ENCODE measurements at regions of chr4 and their contacts with region 1.

Region 1: GRCh38 chr4:122577808-122578781 is 42.8 kb downstream of the IL21 start:
- DNase-seq: peak; percentile 84 to 93 (median 87)
- H3K4me3 ChIP-seq: peak overlapping the region in 1 of 2 donors; percentile 12
- H3K4me3 Mint-ChIP-seq: peak overlapping the region; percentile 69 to 85 (median 78)
- H3K27ac ChIP-seq: peak overlapping the region; percentile 60
- H3K27ac Mint-ChIP-seq: peak overlapping the region; percentile 84 to 98 (median 96)
- H3K4me1 ChIP-seq: peaks cover 32% of the 10 kb centered on the region
- H3K4me1 Mint-ChIP-seq: peaks cover 29 to 49% (median 34%) of the 10 kb centered on the region in 4 donors
- H3K27me3 ChIP-seq: no peaks in the 10 kb centered on the region
- H3K27me3 Mint-ChIP-seq: no peaks in the 10 kb centered on the region

Region 2: GRCh38 chr4:121823505-121824170 is 754.5 kb before region 1 on chr4 and contains the start of gene CCNA2:
- CTCF ChIA-PET with region 1: interaction called, 3 read pairs
- POLR2A ChIA-PET with region 1: no interaction called
- intact Hi-C with region 1: loop called (anchors 5 kb)
- DNase-seq: peak; percentile 93 to 97 (median 94)
- H3K4me3 ChIP-seq: peak within 1 kb of the TSS; percentile 62 to 73
- H3K4me3 Mint-ChIP-seq: peak within 1 kb of the TSS; percentile 87 to 98 (median 91)
- H3K27ac ChIP-seq: peak within 1 kb of the TSS; percentile 55
- H3K27ac Mint-ChIP-seq: peak within 1 kb of the TSS; percentile 77 to 99 (median 92)
- H3K4me1 ChIP-seq: peaks cover 19% of the 10 kb centered on the region
- H3K4me1 Mint-ChIP-seq: peaks cover 6 to 21% (median 15%) of the 10 kb centered on the region in 4 donors
- H3K27me3 ChIP-seq: no peaks in the 10 kb centered on the region
- H3K27me3 Mint-ChIP-seq: no peaks in the 10 kb centered on the region
- total RNA-seq, gene CCNA2: 1.2 to 1.4 TPM

Region 3: DNA sequence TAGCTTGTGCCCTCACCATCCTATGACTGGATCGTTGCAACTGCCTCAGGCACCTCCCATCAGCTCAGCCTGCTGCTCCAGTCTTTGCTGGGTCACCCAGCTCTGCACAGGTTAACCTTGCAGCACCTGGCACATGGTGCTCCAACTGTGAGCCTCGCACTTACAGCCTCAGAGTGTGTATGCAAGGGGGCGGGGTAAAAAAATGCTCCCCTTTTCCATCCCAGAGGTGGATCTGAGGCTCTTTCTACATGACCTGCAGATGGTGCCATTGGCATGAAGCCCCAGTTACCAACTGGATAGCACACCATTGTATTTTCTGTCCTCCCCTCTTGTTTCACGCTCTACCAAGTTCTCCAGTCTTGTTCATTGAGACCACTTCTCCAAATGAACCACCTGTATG is 580.1 kb before region 1 on chr4:
- CTCF ChIA-PET with region 1: no interaction called
- POLR2A ChIA-PET with region 1: no interaction called
- intact Hi-C with region 1: loop called (anchors 5 kb)
- DNase-seq: peak in 3 of 5 donors; percentile 6 to 12 (median 7)
- H3K4me3 ChIP-seq: no peak overlapping the region
- H3K4me3 Mint-ChIP-seq: no peak overlapping the region
- H3K27ac ChIP-seq: no peak overlapping the region
- H3K27ac Mint-ChIP-seq: no peak overlapping the region
- H3K4me1 ChIP-seq: no peaks in the 10 kb centered on the region
- H3K4me1 Mint-ChIP-seq: no peaks in the 10 kb centered on the region
- H3K27me3 ChIP-seq: no peaks in the 10 kb centered on the region
- H3K27me3 Mint-ChIP-seq: peaks cover 14 to 21% of the 10 kb centered on the region in 2 donors

Region 4: DNA sequence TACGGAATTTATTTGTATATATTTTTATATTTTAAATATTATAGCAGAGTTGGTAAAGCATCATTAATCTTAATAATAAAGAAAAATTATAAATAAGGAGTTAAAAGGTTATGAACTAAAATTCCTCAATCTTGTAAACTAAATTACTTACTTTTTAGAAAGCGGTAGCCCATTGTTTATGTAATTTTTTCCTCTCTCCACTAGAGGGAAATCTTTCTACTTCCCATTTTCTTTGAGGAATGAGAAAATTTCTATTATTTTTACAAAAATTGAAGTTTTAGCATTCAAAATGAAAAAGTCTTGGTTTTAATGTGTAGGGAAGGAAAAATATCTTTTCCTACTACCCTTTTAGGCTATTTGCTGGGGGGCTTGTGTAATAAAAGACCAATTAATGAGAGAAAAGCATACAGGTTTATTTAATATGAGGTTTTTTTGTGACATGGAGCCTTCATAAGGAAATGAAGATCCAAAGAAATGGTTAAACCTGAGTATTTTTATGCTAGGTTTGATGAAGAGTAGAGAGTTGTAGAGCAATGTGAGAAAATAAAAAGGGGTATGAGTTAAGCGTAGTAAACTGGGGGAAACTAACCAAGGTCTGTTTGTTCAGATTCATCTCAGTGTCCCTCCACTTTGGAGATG is 268.0 kb before region 1 on chr4:
- CTCF ChIA-PET with region 1: interaction called, 38 read pairs
- POLR2A ChIA-PET with region 1: no interaction called
- intact Hi-C with region 1: loop called (anchors 1 kb)
- DNase-seq: no peak
- H3K4me3 ChIP-seq: no peak overlapping the region
- H3K4me3 Mint-ChIP-seq: no peak overlapping the region
- H3K27ac ChIP-seq: no peak overlapping the region
- H3K27ac Mint-ChIP-seq: peak overlapping the region in 2 of 7 donors; percentile 23 to 75
- H3K4me1 ChIP-seq: no peaks in the 10 kb centered on the region
- H3K4me1 Mint-ChIP-seq: peaks cover 0 to 4% (median 2%) of the 10 kb centered on the region in 4 donors
- H3K27me3 ChIP-seq: no peaks in the 10 kb centered on the region
- H3K27me3 Mint-ChIP-seq: no peaks in the 10 kb centered on the region

Region 5: DNA sequence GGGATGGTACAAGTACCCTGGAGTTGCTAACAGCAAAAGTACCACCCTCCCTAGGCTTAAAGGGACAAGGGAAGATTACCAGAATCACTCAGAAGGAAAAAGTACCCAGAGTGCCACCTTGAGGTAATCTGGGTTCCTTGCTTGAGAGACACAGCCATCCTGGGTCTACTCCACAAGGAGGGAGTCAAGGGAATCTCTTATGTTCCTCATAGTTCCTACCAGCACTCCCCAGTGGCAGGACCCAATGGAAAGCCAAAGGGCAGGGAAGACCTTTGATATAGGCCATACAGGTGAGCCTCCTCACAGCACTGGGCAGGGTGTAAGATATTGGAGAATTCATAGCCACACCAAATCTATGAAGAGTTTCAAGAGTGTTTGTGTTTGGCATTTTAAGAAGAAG is 127.2 kb before region 1 on chr4:
- CTCF ChIA-PET with region 1: interaction called, 24 read pairs
- POLR2A ChIA-PET with region 1: interaction called, 39 read pairs
- intact Hi-C with region 1: loop called (anchors 1 kb)
- DNase-seq: peak in 1 of 5 donors; percentile 11
- H3K4me3 ChIP-seq: no peak overlapping the region
- H3K4me3 Mint-ChIP-seq: no peak overlapping the region
- H3K27ac ChIP-seq: no peak overlapping the region
- H3K27ac Mint-ChIP-seq: peak overlapping the region in 1 of 7 donors; percentile 85
- H3K4me1 ChIP-seq: peaks cover 29% of the 10 kb centered on the region
- H3K4me1 Mint-ChIP-seq: peaks cover 23 to 32% (median 26%) of the 10 kb centered on the region in 4 donors
- H3K27me3 ChIP-seq: no peaks in the 10 kb centered on the region
- H3K27me3 Mint-ChIP-seq: no peaks in the 10 kb centered on the region

Region 6: DNA sequence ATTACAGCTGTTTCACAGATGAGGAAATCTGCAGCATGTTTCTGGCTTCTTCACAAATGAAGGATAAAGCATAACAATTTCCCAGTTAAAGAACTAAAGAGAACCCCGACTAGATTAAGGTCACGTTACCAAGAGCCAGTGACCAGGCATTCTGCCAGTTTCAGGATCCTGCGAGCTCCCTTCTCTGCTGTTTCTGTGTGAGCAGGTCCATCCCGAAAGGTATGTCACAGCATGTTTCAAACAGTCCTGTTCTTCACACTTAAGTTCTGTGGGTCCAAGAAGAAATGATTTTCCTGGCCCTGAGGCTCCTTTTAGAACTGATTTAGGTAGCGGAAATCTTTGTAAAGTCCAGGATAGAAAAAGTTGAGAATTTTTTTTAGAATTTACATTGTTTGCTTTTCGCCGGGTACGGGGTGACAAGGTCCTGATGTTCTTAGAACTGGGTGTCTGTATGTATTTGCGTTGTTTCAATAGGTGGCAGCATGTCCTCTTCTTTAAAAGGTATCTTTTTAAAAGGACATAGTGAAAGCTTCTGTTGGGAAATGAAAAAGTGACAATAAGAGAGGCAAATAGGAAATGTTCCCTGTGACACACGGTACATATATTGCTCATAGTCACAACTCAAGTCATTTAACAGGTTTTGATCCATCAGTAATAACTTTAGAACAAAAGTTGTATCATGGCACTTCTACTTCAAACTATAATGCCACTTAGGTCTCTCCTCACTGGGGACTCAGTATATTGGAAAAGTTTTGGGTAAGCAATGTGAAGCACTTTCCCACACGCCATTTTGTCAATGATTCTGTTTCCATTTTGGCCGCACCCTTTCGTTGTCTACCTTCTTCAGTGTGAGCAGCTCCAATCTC is 24.4 kb after region 1 on chr4:
- CTCF ChIA-PET with region 1: interaction called, 18 read pairs
- POLR2A ChIA-PET with region 1: no interaction called
- intact Hi-C with region 1: no loop called
- DNase-seq: peak in 3 of 5 donors; percentile 24 to 30 (median 28)
- H3K4me3 ChIP-seq: no peak overlapping the region
- H3K4me3 Mint-ChIP-seq: peak overlapping the region in 1 of 8 donors; percentile 0
- H3K27ac ChIP-seq: no peak overlapping the region
- H3K27ac Mint-ChIP-seq: no peak overlapping the region
- H3K4me1 ChIP-seq: no peaks in the 10 kb centered on the region
- H3K4me1 Mint-ChIP-seq: peaks cover 0 to 5% (median 2%) of the 10 kb centered on the region in 4 donors
- H3K27me3 ChIP-seq: no peaks in the 10 kb centered on the region
- H3K27me3 Mint-ChIP-seq: peaks cover 0 to 9% of the 10 kb centered on the region in 2 donors

Region 7: DNA sequence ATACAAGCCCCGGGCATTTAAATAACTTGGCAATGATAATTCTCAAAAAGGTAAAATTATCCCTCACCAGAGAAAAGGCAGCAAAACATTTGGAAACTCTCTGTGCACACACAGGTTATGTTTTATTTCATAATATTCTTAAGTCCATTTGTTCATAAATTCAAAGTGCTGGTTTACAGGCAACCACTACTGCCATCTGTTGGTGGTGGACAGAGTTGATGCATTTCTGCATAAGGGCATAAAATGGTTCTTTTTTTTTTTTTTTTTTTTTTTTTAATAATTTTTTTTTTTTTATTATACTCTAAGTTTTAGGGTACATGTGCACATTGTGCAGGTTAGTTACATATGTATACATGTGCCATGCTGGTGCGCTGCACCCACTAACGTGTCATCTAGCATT is 74.3 kb after region 1 on chr4:
- CTCF ChIA-PET with region 1: no interaction called
- POLR2A ChIA-PET with region 1: no interaction called
- intact Hi-C with region 1: no loop called
- DNase-seq: peak; percentile 40 to 52 (median 47)
- H3K4me3 ChIP-seq: no peak overlapping the region
- H3K4me3 Mint-ChIP-seq: no peak overlapping the region
- H3K27ac ChIP-seq: no peak overlapping the region
- H3K27ac Mint-ChIP-seq: no peak overlapping the region
- H3K4me1 ChIP-seq: no peaks in the 10 kb centered on the region
- H3K4me1 Mint-ChIP-seq: no peaks in the 10 kb centered on the region
- H3K27me3 ChIP-seq: no peaks in the 10 kb centered on the region
- H3K27me3 Mint-ChIP-seq: no peaks in the 10 kb centered on the region

Region 8: GRCh38 chr4:122930862-122931261 is 352.8 kb after region 1 on chr4:
- CTCF ChIA-PET with region 1: interaction called, 4 read pairs
- POLR2A ChIA-PET with region 1: no interaction called
- intact Hi-C with region 1: loop called (anchors 2 kb)
- DNase-seq: peak in 2 of 5 donors; percentile 19 to 26
- H3K4me3 ChIP-seq: no peak overlapping the region
- H3K4me3 Mint-ChIP-seq: no peak overlapping the region
- H3K27ac ChIP-seq: no peak overlapping the region
- H3K27ac Mint-ChIP-seq: no peak overlapping the region
- H3K4me1 ChIP-seq: peaks cover 6% of the 10 kb centered on the region
- H3K4me1 Mint-ChIP-seq: peaks cover 0 to 7% (median 2%) of the 10 kb centered on the region in 4 donors
- H3K27me3 ChIP-seq: no peaks in the 10 kb centered on the region
- H3K27me3 Mint-ChIP-seq: no peaks in the 10 kb centered on the region